Lower lobe of right lung (tissue), 2 donors: ENCODE measurements at regions of chr12 and their contacts with region 1.

Region 1: GRCh38 chr12:77724367-77724957 is 106.2 kb upstream of the NAV3 start:
- DNase-seq: no peak
- ATAC-seq: no peak
- H3K4me3 ChIP-seq: no peak overlapping the region
- H3K27ac ChIP-seq: no peak overlapping the region
- H3K4me1 ChIP-seq: no peaks in the 10 kb centered on the region
- H3K27me3 ChIP-seq: no peaks in the 10 kb centered on the region
- CTCF ChIP-seq: peak; percentile 41

Region 2: DNA sequence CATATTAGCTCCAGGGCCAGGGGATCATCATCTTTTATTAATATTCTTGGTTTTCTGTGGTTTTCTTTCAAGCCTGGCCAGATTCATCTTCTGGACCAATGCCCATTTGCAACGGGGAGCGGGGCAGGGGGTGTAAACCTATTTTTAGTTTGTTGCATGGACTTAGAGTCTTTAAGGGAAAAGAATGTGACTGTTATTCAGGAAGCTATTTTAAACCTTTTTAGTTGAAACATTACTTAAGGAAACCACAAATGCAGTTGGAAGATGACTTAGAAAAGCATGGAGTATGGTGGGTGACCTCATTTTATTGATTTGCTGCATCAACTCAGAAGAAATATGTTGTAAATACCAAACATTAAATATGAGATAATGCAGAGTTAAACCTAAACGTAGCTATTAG is 290.7 kb before region 1 on chr12:
- intact Hi-C with region 1: no loop called
- DNase-seq: no peak
- ATAC-seq: no peak
- H3K4me3 ChIP-seq: no peak overlapping the region
- H3K27ac ChIP-seq: no peak overlapping the region
- H3K4me1 ChIP-seq: no peaks in the 10 kb centered on the region
- H3K27me3 ChIP-seq: no peaks in the 10 kb centered on the region
- CTCF ChIP-seq: no peak

Region 3: DNA sequence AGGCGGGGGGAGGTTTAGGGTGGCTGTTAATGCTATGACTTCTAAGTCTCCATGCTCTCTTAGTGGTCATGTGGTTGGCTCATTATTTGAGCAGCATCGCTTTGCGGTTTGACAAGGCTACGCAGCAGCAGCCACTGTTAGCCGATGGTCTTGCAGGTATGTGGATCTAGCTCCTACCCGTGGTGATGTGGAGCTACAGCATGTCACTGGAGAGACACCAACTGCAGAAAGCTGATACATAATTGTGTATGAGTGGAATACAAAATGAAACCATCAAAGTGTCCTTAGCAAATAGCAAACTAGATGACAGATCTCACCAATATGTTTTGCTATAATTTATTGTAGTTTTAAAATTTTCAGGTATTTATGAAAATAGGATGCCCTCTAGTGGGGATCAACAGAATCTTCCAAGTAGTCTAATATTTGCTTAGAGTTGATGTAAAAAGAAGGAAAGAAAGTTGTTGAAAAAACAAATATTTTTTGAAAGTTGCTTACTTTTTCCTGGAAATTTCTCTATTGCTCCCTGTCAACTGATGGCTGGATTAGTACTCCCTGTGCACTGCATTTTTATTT is 201.2 kb after region 1 on chr12:
- intact Hi-C with region 1: loop called (anchors 10 kb)
- DNase-seq: peak; percentile 55
- ATAC-seq: peak; percentile 81 to 87
- H3K4me3 ChIP-seq: no peak overlapping the region
- H3K27ac ChIP-seq: no peak overlapping the region
- H3K4me1 ChIP-seq: no peaks in the 10 kb centered on the region
- H3K27me3 ChIP-seq: no peaks in the 10 kb centered on the region
- CTCF ChIP-seq: peak; percentile 74